Mammary epithelial cell (primary cell): ENCODE measurements at regions of chr5 and their contacts with region 1.

Region 1: DNA sequence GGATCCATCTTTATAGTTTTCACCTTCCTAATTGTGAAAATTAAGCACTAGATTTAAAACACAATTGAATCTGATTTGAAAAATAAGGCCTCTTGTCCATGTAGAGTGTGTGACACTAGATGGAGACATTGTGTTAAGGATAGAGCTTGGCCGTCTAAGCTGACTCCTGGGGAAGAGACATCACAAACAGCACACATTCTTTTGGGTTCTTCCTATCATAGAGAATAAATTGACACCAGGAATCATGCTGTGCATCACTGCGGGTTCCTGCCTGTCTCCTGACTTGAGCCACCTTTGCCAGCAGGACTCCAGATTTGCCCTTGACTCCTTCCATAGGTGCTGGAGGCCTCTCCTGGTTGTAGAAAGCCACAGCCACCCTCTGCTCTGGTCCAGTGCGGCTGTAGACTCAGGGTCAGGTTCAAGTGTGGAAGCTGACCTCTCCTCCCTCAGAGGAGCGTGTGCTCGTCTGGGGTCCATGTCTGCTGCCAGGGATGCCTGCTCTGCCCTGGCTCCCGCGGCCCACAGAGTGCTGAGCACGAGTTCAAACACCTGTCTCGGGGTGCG is 11.2 kb downstream of the ROPN1L start:
- DNase-seq: peak; percentile 64
- H3K4me3 ChIP-seq: no peak overlapping the region
- H3K27ac ChIP-seq: no peak overlapping the region
- H3K4me1 ChIP-seq: peaks cover 43% of the 10 kb centered on the region
- H3K27me3 ChIP-seq: no peaks in the 10 kb centered on the region
- CTCF ChIP-seq: peak; percentile 79 to 88

Region 2: GRCh38 chr5:10513501-10514442 is 60.9 kb after region 1 on chr5:
- CTCF ChIA-PET with region 1: no interaction called
- dilution Hi-C with region 1: no loop called
- in situ Hi-C with region 1: no loop called
- intact Hi-C with region 1: no loop called
- DNase-seq: no peak
- H3K4me3 ChIP-seq: no peak overlapping the region
- H3K27ac ChIP-seq: no peak overlapping the region
- H3K4me1 ChIP-seq: peaks cover 10% of the 10 kb centered on the region
- H3K27me3 ChIP-seq: no peaks in the 10 kb centered on the region
- CTCF ChIP-seq: no peak

Region 3: GRCh38 chr5:10552183-10553143 is 99.6 kb after region 1 on chr5:
- CTCF ChIA-PET with region 1: no interaction called
- dilution Hi-C with region 1: no loop called
- in situ Hi-C with region 1: no loop called
- intact Hi-C with region 1: loop called (anchors 5 kb)
- DNase-seq: no peak
- H3K4me3 ChIP-seq: no peak overlapping the region
- H3K27ac ChIP-seq: peak overlapping the region; percentile 47
- H3K4me1 ChIP-seq: peaks cover 35% of the 10 kb centered on the region
- H3K27me3 ChIP-seq: no peaks in the 10 kb centered on the region
- CTCF ChIP-seq: no peak

Region 4: GRCh38 chr5:10684303-10685086 is 231.6 kb after region 1 on chr5:
- CTCF ChIA-PET with region 1: no interaction called
- dilution Hi-C with region 1: no loop called
- in situ Hi-C with region 1: no loop called
- intact Hi-C with region 1: loop called (anchors 2 kb)
- DNase-seq: peak; percentile 76
- H3K4me3 ChIP-seq: no peak overlapping the region
- H3K27ac ChIP-seq: no peak overlapping the region
- H3K4me1 ChIP-seq: peaks cover 13% of the 10 kb centered on the region
- H3K27me3 ChIP-seq: no peaks in the 10 kb centered on the region
- CTCF ChIP-seq: no peak

Region 5: DNA sequence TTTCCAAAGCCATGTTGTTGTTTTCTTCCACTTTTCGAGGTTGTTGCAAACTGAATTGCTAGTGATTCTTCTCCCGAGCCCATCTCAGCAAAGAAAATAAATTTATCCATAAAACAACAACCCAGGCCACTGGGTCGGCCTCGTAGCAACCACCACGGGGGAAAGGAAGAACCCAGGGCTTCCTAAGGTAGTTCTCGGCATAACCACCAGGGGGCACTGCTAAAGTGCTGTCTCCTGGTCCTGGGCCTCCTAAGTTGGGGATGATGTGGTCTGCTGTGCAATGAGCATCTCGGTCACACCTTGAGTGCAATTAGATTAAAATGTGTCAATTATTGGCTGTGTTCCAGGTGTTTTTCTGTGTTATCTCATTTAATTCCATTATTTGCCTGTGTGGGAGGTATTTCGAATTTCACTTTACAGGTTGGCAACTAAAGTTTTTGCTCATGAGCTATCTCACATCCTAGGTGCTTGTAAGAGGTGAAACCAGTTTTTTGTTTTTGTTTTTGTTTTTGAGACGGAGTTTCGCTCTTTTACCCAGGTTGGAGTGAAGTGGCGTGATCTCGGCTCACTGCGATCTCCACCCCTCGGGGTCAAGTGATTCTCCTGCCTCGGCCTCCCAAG is 411.0 kb after region 1 on chr5:
- CTCF ChIA-PET with region 1: no interaction called
- dilution Hi-C with region 1: no loop called
- in situ Hi-C with region 1: no loop called
- intact Hi-C with region 1: loop called (anchors 5 kb)
- DNase-seq: peak; percentile 17
- H3K4me3 ChIP-seq: no peak overlapping the region
- H3K27ac ChIP-seq: no peak overlapping the region
- H3K4me1 ChIP-seq: no peaks in the 10 kb centered on the region
- H3K27me3 ChIP-seq: no peaks in the 10 kb centered on the region
- CTCF ChIP-seq: peak; percentile 80 to 87

Region 6: DNA sequence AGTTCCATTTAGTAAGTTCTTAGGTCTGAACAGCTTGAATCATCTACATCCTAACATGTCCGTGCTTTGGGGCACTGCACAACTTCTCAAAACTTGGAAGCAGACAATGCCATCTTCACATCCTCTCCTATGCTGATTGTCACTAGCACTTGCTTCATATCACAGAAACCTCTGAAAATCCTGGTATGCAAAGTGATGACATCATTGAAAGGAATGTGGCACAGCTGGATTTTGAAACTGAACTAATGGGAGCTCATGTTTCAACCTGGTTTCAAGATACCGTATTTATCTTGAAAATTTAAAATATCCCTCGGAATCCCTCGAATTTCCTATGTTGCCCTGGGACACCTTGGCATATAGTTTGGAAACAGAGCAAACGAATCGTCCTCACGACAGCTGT is 798.4 kb after region 1 on chr5:
- CTCF ChIA-PET with region 1: no interaction called
- dilution Hi-C with region 1: no loop called
- in situ Hi-C with region 1: no loop called
- intact Hi-C with region 1: loop called (anchors 10 kb)
- DNase-seq: peak; percentile 75
- H3K4me3 ChIP-seq: no peak overlapping the region
- H3K27ac ChIP-seq: no peak overlapping the region
- H3K4me1 ChIP-seq: peaks cover 10% of the 10 kb centered on the region
- H3K27me3 ChIP-seq: no peaks in the 10 kb centered on the region
- CTCF ChIP-seq: no peak